Naive thymus-derived CD4-positive, alpha-beta T cell (primary cell): ENCODE measurements at regions of chr7 and their contacts with region 1.

Region 1: GRCh38 chr7:93231799-93232672 is at the start of gene VPS50:
- DNase-seq: peak; percentile 74 to 97 (median 96)
- ATAC-seq: peak; percentile 98
- H3K4me3 ChIP-seq: peak within 1 kb of the TSS; percentile 93
- H3K4me3 Mint-ChIP-seq: peak within 1 kb of the TSS; percentile 91 to 99 (median 97)
- H3K27ac ChIP-seq: peak within 1 kb of the TSS; percentile 89
- H3K27ac Mint-ChIP-seq: peak within 1 kb of the TSS; percentile 93 to 99 (median 98)
- H3K4me1 ChIP-seq: peaks cover 6% of the 10 kb centered on the region in 2 donors
- H3K4me1 Mint-ChIP-seq: peaks cover 5 to 38% (median 21%) of the 10 kb centered on the region in 7 donors
- H3K27me3 ChIP-seq: no peaks in the 10 kb centered on the region
- H3K27me3 Mint-ChIP-seq: peaks cover 0 to 12% (median 0%) of the 10 kb centered on the region in 5 donors
- total RNA-seq, gene VPS50: 19.8 to 44.2 (median 36.8) TPM

Region 2: DNA sequence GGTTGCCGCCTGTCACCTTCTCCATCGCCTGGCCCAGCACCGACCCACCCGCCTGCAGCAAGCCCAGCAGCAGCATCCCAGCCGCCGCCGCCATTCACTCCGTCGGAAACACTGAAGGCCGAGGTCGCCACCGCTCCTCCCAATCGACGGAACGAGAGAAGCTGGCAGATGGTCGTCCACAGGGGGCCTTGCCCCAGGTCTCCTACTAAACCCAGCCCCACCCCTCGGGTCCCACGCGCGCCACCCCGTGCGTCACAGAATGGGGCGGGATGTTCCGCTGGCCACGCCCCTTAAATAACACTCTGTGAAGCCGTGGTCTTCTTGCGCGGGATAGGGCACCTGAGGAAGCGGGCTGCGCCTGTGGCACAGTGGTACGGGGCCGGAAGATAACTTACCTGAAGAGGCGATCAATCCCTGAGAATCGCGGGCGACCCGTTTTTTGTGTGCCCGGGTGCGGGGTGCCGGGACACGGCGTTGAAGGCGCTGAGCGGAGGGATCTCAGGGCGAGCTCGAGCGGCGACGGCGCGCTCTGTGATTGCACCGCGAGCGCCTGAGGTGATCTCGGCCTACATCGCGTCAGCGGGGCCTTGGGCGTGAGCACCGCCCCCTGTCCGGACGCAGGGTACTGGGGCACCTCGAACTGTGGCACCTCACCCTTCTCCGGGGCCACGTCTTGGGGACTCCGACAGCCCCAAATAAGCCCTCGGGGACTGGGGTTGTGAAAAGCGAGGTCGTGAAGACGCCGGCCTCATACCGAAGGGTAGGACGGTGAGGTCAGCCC is 1097.6 kb before region 1 on chr7 and contains the start of gene CYP51A1:
- CTCF ChIA-PET with region 1: no interaction called
- POLR2A ChIA-PET with region 1: no interaction called
- intact Hi-C with region 1: loop called (anchors 1 to 5 kb)
- DNase-seq: peak; percentile 93 to 98 (median 96)
- ATAC-seq: peak; percentile 93
- H3K4me3 ChIP-seq: peak within 1 kb of the TSS; percentile 92
- H3K4me3 Mint-ChIP-seq: peak within 1 kb of the TSS; percentile 95 to 100 (median 98)
- H3K27ac ChIP-seq: peak within 1 kb of the TSS; percentile 94
- H3K27ac Mint-ChIP-seq: peak within 1 kb of the TSS; percentile 89 to 100 (median 99)
- H3K4me1 ChIP-seq: peaks cover 4 to 12% of the 10 kb centered on the region in 2 donors
- H3K4me1 Mint-ChIP-seq: peaks cover 12 to 49% (median 40%) of the 10 kb centered on the region in 7 donors
- H3K27me3 ChIP-seq: no peaks in the 10 kb centered on the region
- H3K27me3 Mint-ChIP-seq: peaks cover 0 to 2% (median 0%) of the 10 kb centered on the region in 5 donors
- total RNA-seq, gene CYP51A1: 14.7 to 36.6 (median 21.7) TPM

Region 3: DNA sequence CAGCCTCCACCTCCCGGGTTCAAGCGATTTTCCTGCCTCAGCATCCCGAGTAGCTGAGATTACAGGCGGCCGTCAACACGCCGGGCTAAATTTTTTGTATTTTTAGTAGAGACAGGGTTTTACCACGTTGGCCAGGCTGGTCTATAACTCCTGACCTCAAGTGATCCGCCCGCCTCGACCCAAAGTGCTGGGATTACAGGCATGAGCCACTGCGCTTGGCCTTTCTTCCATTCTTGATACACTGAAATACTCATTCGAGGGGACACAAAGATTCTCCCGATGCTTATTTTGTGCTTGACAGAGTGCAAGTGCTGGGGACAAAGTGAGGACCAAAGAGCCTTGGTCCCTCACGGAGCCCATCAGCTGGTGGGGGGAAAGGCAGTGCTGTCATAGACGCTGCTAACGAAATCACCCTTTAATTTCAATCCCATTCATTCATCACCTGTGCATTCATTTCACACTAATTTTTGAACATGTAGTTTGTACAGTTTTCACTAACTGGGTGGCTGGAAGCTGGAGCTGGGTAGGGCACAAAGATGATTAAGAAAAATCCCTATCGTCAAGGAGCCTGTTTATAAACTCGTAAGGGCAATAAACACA is 641.2 kb before region 1 on chr7:
- CTCF ChIA-PET with region 1: no interaction called
- POLR2A ChIA-PET with region 1: no interaction called
- intact Hi-C with region 1: loop called (anchors 1 kb)
- DNase-seq: peak in 1 of 9 donors; percentile 11
- ATAC-seq: no peak
- H3K4me3 ChIP-seq: peak overlapping the region; percentile 77
- H3K4me3 Mint-ChIP-seq: peak overlapping the region; percentile 90 to 96 (median 94)
- H3K27ac ChIP-seq: peak overlapping the region; percentile 94
- H3K27ac Mint-ChIP-seq: peak overlapping the region in 8 of 9 donors; percentile 22 to 96 (median 76)
- H3K4me1 ChIP-seq: peaks cover 14 to 21% of the 10 kb centered on the region in 2 donors
- H3K4me1 Mint-ChIP-seq: peaks cover 27 to 46% (median 39%) of the 10 kb centered on the region in 7 donors
- H3K27me3 ChIP-seq: no peaks in the 10 kb centered on the region
- H3K27me3 Mint-ChIP-seq: peaks cover 0 to 4% (median 0%) of the 10 kb centered on the region in 5 donors

Region 4: GRCh38 chr7:92731335-92732063 is 500.5 kb before region 1 on chr7:
- CTCF ChIA-PET with region 1: no interaction called
- POLR2A ChIA-PET with region 1: no interaction called
- intact Hi-C with region 1: no loop called
- DNase-seq: peak in 1 of 9 donors; percentile 35
- ATAC-seq: peak; percentile 63
- H3K4me3 ChIP-seq: no peak overlapping the region
- H3K4me3 Mint-ChIP-seq: peak overlapping the region in 1 of 10 donors; percentile 59
- H3K27ac ChIP-seq: no peak overlapping the region
- H3K27ac Mint-ChIP-seq: peak overlapping the region in 1 of 9 donors; percentile 67
- H3K4me1 ChIP-seq: no peaks in the 10 kb centered on the region
- H3K4me1 Mint-ChIP-seq: peaks cover 16 to 60% (median 27%) of the 10 kb centered on the region in 7 donors
- H3K27me3 ChIP-seq: no peaks in the 10 kb centered on the region
- H3K27me3 Mint-ChIP-seq: no peaks in the 10 kb centered on the region

Region 5: DNA sequence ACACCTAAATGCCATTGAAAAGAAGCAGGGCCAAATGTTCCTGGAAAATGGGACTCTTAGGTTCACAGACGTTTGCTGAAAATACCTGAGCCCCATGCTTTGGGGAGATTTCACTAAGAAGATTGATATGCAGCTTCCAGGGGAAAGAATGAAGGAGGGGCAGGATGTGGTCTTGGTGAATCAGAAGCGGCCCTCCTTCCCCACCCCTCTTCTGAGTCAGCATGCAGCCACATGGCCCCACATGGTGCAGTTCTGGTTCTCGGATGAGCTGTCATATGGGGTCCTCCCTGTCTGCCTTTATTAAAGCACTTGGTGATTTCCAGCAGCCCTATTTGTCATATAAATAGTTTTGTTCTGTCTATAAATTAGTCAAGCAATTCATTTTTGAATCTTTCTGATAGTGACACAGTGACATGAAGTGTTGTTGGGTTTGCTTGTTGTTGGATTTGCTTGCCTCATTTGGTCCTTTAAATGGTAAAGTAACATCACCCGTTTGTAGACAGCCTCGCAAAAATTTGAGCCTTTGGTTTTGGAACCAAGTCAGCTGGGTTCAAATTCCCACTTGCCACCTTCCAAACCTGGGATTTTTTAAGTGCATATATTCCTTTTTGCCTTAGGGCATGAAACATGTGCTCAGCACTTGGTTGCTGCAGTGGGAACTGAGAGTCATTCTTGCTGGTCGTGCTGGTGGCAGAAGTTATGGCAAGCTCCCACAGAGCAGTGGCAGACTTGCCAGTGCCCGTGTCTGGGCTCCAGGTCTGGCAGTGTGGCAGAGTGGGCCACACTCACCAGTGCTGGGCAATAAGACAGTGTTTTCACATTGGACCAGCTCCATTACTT is 327.5 kb before region 1 on chr7:
- CTCF ChIA-PET with region 1: no interaction called
- POLR2A ChIA-PET with region 1: no interaction called
- intact Hi-C with region 1: loop called in 1 of 2 experiments (anchors 1 kb)
- DNase-seq: peak in 8 of 9 donors; percentile 21 to 80 (median 42)
- ATAC-seq: peak; percentile 99
- H3K4me3 ChIP-seq: no peak overlapping the region
- H3K4me3 Mint-ChIP-seq: peak overlapping the region in 1 of 10 donors; percentile 44
- H3K27ac ChIP-seq: no peak overlapping the region
- H3K27ac Mint-ChIP-seq: peak overlapping the region in 2 of 9 donors; percentile 39 to 83
- H3K4me1 ChIP-seq: peaks cover 0 to 7% of the 10 kb centered on the region in 2 donors
- H3K4me1 Mint-ChIP-seq: peaks cover 0 to 23% (median 12%) of the 10 kb centered on the region in 7 donors
- H3K27me3 ChIP-seq: no peaks in the 10 kb centered on the region
- H3K27me3 Mint-ChIP-seq: peaks cover 0 to 5% (median 0%) of the 10 kb centered on the region in 5 donors

Region 6: DNA sequence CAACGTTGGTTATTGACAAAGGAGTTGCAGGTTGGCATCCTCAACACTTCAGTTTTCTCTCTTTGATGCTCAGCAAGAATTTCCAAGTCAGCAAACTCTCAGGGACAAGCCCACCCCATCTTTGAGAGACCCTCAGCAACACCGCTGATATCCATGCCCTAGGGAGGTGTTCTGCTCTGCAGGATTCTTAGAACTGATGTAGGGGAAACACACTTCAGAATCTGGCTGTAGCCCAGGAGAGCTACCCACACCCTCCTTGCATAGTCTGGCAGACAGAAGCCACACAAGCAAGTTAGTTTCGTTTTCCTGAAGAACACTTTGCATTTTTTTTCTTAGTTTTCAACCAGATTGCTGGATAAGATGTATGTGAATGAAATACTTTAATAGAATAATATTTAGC is 84.7 kb before region 1 on chr7:
- CTCF ChIA-PET with region 1: interaction called, 3 read pairs
- POLR2A ChIA-PET with region 1: interaction called, 3 read pairs
- intact Hi-C with region 1: loop called (anchors 1 kb)
- DNase-seq: peak in 8 of 9 donors; percentile 30 to 51 (median 39)
- ATAC-seq: peak; percentile 76
- H3K4me3 ChIP-seq: peak overlapping the region; percentile 68
- H3K4me3 Mint-ChIP-seq: peak overlapping the region; percentile 84 to 98 (median 94)
- H3K27ac ChIP-seq: peak overlapping the region; percentile 69
- H3K27ac Mint-ChIP-seq: peak overlapping the region; percentile 86 to 96 (median 92)
- H3K4me1 ChIP-seq: peaks cover 13 to 21% of the 10 kb centered on the region in 2 donors
- H3K4me1 Mint-ChIP-seq: peaks cover 29 to 51% (median 36%) of the 10 kb centered on the region in 7 donors
- H3K27me3 ChIP-seq: no peaks in the 10 kb centered on the region
- H3K27me3 Mint-ChIP-seq: no peaks in the 10 kb centered on the region

Region 7: DNA sequence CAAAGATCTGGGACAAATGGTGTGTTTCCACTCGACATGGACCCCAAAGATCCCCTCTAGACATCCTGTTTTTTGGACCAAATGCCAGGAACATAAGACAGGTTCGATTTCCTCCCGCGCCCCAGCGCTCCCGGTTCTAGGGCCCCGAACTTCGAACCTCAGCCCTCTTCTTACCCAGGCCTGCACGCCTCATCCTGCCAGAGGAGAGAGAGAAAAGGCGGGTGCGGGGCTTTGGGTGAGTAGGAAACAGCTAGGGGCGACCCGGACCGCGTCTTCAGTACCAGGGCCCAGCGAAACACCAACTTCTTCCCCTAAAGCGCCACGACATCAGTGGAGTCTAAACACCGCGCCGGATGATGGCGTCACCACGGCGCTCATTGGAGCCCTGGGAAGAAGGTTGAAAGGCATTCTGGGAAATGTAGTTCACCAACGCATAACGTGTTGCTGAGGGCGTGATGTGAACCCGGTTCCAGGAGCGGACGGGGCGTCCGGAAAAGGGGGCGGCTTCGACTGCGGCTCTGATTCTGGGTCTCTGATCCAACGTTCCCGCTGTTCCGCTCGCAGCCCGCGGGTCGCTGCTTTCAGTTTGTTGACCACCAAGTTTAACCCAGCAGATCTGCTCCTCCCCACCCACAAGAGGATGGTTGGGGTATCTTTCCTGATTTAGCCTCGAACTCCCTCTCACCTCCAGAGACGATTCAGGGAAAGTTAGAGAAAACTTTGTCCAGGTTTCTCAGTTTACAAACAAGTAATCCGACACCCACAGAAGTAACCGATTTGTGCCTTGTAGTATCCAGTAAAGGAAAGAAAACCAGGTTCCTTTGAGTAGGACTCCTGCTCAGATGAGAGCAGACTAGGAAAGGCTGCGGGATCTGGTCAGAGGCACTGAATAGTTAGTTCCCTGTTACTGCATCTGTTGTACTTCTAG is 772.3 kb after region 1 on chr7 and contains the start of gene BET1:
- CTCF ChIA-PET with region 1: no interaction called
- POLR2A ChIA-PET with region 1: no interaction called
- intact Hi-C with region 1: loop called (anchors 1 kb)
- DNase-seq: peak; percentile 87 to 96 (median 92)
- ATAC-seq: peak; percentile 98
- H3K4me3 ChIP-seq: peak within 1 kb of the TSS; percentile 75
- H3K4me3 Mint-ChIP-seq: peak within 1 kb of the TSS; percentile 88 to 100 (median 99)
- H3K27ac ChIP-seq: peak within 1 kb of the TSS; percentile 91
- H3K27ac Mint-ChIP-seq: peak within 1 kb of the TSS; percentile 95 to 100 (median 99)
- H3K4me1 ChIP-seq: peaks cover 3 to 17% of the 10 kb centered on the region in 2 donors
- H3K4me1 Mint-ChIP-seq: peaks cover 22 to 56% (median 51%) of the 10 kb centered on the region in 7 donors
- H3K27me3 ChIP-seq: no peaks in the 10 kb centered on the region
- H3K27me3 Mint-ChIP-seq: peaks cover 0 to 28% (median 11%) of the 10 kb centered on the region in 5 donors
- total RNA-seq, gene BET1: 9.9 to 37.6 (median 25.2) TPM

Region 8: DNA sequence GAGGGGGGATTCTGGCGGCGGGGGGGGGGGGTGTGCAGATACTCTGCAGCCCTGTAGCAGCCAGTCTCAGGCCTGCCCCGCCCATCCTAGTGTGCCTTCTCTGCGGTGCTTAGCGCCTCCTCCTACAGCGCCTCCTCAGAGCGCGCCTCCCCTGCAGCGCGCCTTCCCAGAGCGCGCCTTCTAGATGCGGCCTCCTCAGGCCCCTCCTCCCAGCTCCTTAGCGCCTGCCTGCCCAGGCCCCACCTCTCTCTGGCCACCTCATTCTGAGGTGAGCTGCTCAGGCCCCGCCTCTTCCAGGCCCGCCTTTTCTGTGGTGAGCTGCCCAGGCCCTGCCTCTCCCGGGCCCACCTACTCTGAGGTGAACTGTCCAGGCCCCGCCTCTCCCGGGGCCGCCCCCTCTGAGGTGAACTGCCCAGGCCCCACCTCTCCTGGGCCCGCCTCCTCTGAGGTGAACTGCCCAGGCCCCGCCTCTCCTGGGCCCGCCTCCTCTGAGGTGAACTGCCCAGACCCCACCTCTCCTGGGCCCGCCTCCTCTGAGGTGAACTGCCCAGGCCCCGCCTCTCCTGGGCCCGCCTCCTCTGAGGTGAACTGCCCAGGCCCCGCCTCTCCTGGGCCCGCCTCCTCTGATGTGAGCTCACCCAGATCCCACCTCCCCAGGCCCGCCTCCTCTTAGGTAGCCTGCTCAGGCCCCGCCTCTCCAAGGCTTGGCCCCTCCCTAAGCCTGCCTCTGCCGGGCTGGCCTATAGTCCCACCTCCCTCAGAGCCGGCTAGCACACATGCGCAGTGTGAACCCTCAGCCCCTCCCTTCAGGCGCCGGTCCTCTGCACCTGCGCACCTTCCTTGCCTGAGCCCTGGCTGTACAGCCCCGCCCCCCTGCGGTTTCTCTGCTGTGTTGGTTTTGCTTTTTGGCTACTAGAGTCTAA is 1426.0 kb after region 1 on chr7:
- CTCF ChIA-PET with region 1: no interaction called
- POLR2A ChIA-PET with region 1: no interaction called
- intact Hi-C with region 1: loop called in 1 of 2 experiments (anchors 1 kb)
- DNase-seq: peak; percentile 83 to 97 (median 95)
- ATAC-seq: peak; percentile 88
- H3K4me3 ChIP-seq: peak overlapping the region; percentile 85
- H3K4me3 Mint-ChIP-seq: peak overlapping the region; percentile 83 to 91 (median 88)
- H3K27ac ChIP-seq: no peak overlapping the region
- H3K27ac Mint-ChIP-seq: peak overlapping the region in 6 of 9 donors; percentile 17 to 84 (median 54)
- H3K4me1 ChIP-seq: peaks cover 15 to 16% of the 10 kb centered on the region in 2 donors
- H3K4me1 Mint-ChIP-seq: peaks cover 8 to 24% (median 17%) of the 10 kb centered on the region in 7 donors
- H3K27me3 ChIP-seq: peaks cover 14 to 21% of the 10 kb centered on the region in 2 donors
- H3K27me3 Mint-ChIP-seq: peaks cover 11 to 28% (median 23%) of the 10 kb centered on the region in 5 donors